H1 (cell line): ENCODE measurements at regions of chr1 and their contacts with region 1.

Region 1: DNA sequence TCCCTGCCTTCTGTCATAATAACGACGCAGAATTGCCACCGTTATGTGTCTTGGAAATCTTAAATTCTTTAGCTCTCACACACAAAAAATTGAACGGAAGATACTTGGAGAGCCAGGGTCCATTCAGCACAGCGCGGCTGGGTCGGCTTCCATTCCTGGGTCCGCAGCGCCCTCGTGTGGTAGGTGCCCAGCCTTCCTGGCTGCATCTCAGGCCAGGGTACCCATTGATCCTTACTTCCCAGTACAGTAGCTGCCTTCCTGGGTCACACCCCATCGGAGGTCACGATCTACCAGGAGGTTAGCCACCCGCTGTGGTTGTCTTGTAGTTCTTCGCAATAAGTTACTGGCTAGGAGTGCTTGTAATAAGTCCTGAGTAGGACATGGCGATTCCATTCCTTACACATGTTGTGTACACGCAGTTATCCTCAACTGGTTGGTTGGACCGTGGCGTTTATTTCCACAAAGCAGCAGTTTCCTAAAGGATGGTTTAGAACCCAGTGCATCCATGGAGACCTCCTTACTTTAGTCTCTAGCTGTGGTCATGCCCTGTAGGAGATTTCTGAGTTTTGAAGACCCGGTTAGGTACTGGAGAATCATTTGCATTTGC is 9.9 kb upstream of the MTARC1 start:
- DNase-seq: peak in 1 of 2 experiments; percentile 85
- H3K4me3 ChIP-seq: no peak overlapping the region
- H3K27ac ChIP-seq: no peak overlapping the region
- H3K4me1 ChIP-seq: no peaks in the 10 kb centered on the region
- H3K27me3 ChIP-seq: no peaks in the 10 kb centered on the region
- CTCF ChIP-seq: peak; percentile 73 to 86 (median 82)
- EP300 ChIP-seq: no peak
- POLR2A ChIP-seq: no peak
- RAD21 ChIP-seq: peak; percentile 86 to 89

Region 2: GRCh38 chr1:220711056-220711809 is 65.6 kb before region 1 on chr1:
- CTCF ChIA-PET with region 1: no interaction called
- POLR2A ChIA-PET with region 1: no interaction called
- DNase-seq: no peak
- H3K4me3 ChIP-seq: no peak overlapping the region
- H3K27ac ChIP-seq: no peak overlapping the region
- H3K4me1 ChIP-seq: peaks cover 0 to 3% (median 0%) of the 10 kb centered on the region in 4 experiments; a peak in 1 of 7 replicates
- H3K27me3 ChIP-seq: no peaks in the 10 kb centered on the region
- CTCF ChIP-seq: no peak
- EP300 ChIP-seq: no peak
- POLR2A ChIP-seq: no peak
- RAD21 ChIP-seq: no peak

Region 3: GRCh38 chr1:220748089-220748934 is 28.5 kb before region 1 on chr1 and contains the start of gene MTARC2:
- CTCF ChIA-PET with region 1: interaction called, 12 read pairs
- POLR2A ChIA-PET with region 1: no interaction called
- DNase-seq: peak; percentile 57 to 81
- H3K4me3 ChIP-seq: peak within 1 kb of the TSS; percentile 71 to 76 (median 74)
- H3K27ac ChIP-seq: peak within 1 kb of the TSS; percentile 44; the same call in 1 of the 2 replicates
- H3K4me1 ChIP-seq: peaks cover 3 to 9% (median 7%) of the 10 kb centered on the region in 4 experiments; a peak in 5 of 7 replicates
- H3K27me3 ChIP-seq: peaks cover 0 to 28% (median 15%) of the 10 kb centered on the region in 4 experiments; a peak in 6 of 7 replicates
- CTCF ChIP-seq: no peak
- EP300 ChIP-seq: no peak
- POLR2A ChIP-seq: peak; percentile 79 to 92
- RAD21 ChIP-seq: no peak
- total RNA-seq, gene MTARC2: 6.9 and 7.2 TPM in 2 replicates

Region 4: DNA sequence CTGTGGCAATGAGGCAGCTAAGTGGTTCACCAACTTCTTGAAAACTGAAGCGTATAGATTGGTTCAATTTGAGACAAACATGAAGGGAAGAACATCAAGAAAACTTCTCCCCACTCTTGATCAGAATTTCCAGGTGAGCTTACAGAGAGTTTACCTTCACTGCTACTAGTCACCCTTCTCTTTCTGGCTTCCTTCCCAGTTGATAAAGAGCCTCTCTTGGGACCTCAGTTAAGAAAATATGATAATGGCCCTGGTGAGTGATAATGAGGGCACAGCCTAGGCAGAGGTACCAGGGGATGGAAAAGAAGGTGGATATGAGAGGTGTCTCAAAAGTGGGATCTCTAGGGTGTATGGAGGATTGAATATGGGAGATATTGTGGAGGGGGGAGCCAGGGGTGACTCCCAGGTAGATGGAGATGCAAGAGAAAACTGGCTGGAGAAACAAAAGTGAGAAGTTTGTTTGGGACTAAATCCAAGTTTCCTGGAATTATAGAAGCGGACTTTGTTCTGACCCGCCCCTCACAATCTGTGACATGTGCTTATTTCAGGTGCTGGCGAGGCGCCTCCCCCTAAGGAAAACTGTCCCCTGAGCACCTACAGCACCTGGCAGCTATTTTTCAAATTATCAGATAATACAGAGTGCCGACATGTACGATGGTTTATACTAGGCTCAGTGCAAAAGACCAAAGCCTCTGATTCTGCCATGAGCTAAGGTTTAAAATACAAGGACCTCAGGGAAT is 15.0 kb before region 1 on chr1:
- CTCF ChIA-PET with region 1: interaction called, 28 read pairs
- POLR2A ChIA-PET with region 1: interaction called, 3 read pairs
- DNase-seq: no peak
- H3K4me3 ChIP-seq: no peak overlapping the region
- H3K27ac ChIP-seq: no peak overlapping the region
- H3K4me1 ChIP-seq: no peaks in the 10 kb centered on the region
- H3K27me3 ChIP-seq: no peaks in the 10 kb centered on the region
- CTCF ChIP-seq: no peak
- EP300 ChIP-seq: no peak
- POLR2A ChIP-seq: no peak
- RAD21 ChIP-seq: no peak

Region 5: GRCh38 chr1:221187174-221187573 is 410.4 kb after region 1 on chr1:
- CTCF ChIA-PET with region 1: no interaction called
- POLR2A ChIA-PET with region 1: no interaction called
- DNase-seq: no peak
- H3K4me3 ChIP-seq: no peak overlapping the region
- H3K27ac ChIP-seq: no peak overlapping the region
- H3K4me1 ChIP-seq: no peaks in the 10 kb centered on the region
- H3K27me3 ChIP-seq: no peaks in the 10 kb centered on the region
- CTCF ChIP-seq: no peak
- EP300 ChIP-seq: no peak
- POLR2A ChIP-seq: no peak
- RAD21 ChIP-seq: no peak